OCI-LY7 (cell line): ENCODE measurements at regions of chr7 and their contacts with region 1.

Region 1: DNA sequence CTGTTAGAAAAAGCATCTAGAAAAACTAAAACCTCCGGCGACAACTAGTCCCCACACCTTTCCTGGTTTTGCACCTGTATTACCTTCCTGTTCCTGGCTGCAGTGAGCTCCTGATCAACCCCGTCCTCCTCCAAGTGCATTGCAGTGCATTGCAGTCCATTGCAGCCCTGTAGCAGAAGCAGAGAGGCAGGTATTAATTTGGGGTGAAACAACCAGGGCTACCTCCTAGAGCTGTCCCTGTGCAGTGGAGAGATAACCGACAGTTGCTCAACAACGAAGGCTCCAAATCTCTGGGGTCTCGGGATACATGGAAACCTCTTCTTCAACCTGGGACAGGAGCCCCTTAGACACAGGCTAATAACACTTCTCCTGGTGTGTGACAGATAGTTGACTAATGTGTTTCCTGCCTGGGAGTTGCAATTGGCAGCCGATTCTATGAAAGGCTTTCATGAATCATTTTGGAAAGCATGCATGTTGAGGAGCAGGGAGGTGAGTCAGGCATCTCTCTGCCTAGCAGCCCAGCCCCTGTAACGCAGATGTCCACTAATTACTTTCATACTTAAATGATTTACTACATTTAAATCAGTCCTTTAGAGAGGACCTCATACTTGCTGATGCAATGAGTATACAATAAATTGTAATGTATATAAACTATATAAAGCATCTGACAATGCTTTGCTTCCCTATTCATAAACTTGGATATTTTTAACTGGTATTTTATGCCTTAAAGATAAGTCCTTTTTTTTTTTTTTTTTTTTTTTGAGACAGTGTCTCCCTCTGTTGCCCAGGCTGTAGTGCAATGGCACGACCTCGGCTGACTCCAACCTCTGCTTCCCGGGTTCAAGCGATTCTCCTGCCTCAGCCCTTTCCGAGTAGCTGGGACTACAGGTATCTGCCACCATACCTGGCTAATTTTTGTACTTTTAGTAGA is 59.0 kb downstream of the PRR15 start:
- DNase-seq: no peak
- H3K4me3 ChIP-seq: no peak overlapping the region
- H3K27ac ChIP-seq: no peak overlapping the region
- H3K4me1 ChIP-seq: no peaks in the 10 kb centered on the region
- CTCF ChIP-seq: no peak

Region 2: GRCh38 chr7:29345600-29345999 is 277.0 kb before region 1 on chr7:
- CTCF ChIA-PET with region 1: no interaction called
- POLR2A ChIA-PET with region 1: no interaction called
- intact Hi-C with region 1: no loop called
- DNase-seq: no peak
- H3K4me3 ChIP-seq: no peak overlapping the region
- H3K27ac ChIP-seq: no peak overlapping the region
- H3K4me1 ChIP-seq: no peaks in the 10 kb centered on the region
- CTCF ChIP-seq: no peak

Region 3: DNA sequence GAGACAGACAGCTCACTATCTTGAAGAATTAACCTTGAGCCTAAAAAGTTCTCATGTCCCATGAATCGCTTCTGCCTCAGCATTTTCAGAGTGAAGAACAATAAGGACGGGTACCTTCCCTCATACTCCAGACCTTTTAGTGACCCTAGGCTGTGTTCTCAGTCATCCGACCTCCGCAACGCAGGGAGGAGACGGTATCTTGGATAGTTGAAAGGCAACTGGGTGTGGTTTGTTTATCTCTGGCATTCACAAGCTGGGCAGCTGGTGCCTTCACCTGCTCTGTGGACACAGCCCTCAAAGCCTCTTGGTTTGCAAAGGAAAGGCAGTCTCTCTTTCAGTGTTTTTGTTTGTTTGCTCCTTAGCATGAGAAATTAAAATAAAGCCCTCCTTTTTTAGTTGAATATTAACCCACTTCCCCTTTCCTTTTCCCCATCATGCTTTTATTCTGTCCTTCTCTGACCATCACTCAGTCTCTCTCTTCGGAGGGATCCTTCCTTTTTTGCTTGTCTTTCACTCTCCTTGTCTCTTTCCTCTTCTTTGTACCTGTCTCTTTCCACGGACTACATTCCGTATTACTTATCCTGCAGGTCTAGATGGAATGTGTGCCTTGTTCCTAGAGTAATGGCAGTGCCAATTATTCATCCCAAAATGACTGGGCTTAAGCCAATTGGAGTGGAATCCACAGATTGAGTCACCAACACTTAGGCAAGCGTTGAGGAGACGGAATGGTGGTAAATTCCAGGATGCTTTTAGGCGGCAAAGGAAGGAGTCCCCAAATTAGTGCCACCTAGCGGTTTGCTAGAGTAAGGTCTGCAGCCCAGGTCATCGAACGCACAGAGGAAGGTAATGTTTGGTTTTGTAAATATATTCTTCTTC is 13.2 kb before region 1 on chr7:
- CTCF ChIA-PET with region 1: interaction called, 14 read pairs
- POLR2A ChIA-PET with region 1: no interaction called
- intact Hi-C with region 1: no loop called
- DNase-seq: no peak
- H3K4me3 ChIP-seq: no peak overlapping the region
- H3K27ac ChIP-seq: no peak overlapping the region
- H3K4me1 ChIP-seq: no peaks in the 10 kb centered on the region
- CTCF ChIP-seq: peak; percentile 58